ENCODE measurements at regions of chr19 and their contacts with region 1.

Region 1: GRCh38 chr19:49676690-49677231 is 310 bp upstream of the PRMT1 start:
- DNase-seq: peak; percentile 96 to 100 (median 98)
- ATAC-seq: peak; percentile 75
- H3K4me3 ChIP-seq: peak overlapping the region; percentile 83 to 99
- H3K4me3 Mint-ChIP-seq: peak overlapping the region; percentile 99
- H3K27ac ChIP-seq: peak overlapping the region; percentile 86 to 99
- H3K27ac Mint-ChIP-seq: peak overlapping the region; percentile 99
- H3K4me1 ChIP-seq: peaks cover 40% of the 10 kb centered on the region
- H3K4me1 Mint-ChIP-seq: peaks cover 43% of the 10 kb centered on the region
- H3K27me3 ChIP-seq: no peaks in the 10 kb centered on the region
- H3K27me3 Mint-ChIP-seq: no peaks in the 10 kb centered on the region
- CTCF ChIP-seq: no peak

Region 2: DNA sequence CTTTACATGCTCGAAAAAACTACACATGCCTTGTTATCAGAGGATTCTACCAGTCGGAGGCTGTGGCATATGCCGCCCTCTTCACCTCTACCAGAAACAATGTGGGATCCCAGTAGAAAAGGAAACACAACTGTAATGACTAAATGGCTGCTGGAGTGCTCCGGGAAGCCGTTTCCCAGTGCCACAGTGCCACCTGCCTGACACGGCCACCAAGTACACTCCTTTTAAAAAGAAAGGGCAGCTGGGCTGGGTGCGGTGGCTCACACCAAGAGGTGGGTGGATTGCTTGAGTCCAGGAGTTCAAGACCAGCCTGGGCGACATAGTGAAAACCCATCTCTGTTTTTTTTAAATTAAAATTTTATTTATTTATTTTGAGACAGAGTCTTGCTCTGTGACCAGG is 451.9 kb before region 1 on chr19:
- CTCF ChIA-PET with region 1: no interaction called
- POLR2A ChIA-PET with region 1: no interaction called
- intact Hi-C with region 1: loop called (anchors 2 to 5 kb)
- DNase-seq: peak in 2 of 9 experiments; percentile 26 to 28
- ATAC-seq: no peak
- H3K4me3 ChIP-seq: no peak overlapping the region
- H3K4me3 Mint-ChIP-seq: no peak overlapping the region
- H3K27ac ChIP-seq: no peak overlapping the region
- H3K27ac Mint-ChIP-seq: no peak overlapping the region
- H3K4me1 ChIP-seq: peaks cover 8% of the 10 kb centered on the region
- H3K4me1 Mint-ChIP-seq: peaks cover 4% of the 10 kb centered on the region
- H3K27me3 ChIP-seq: no peaks in the 10 kb centered on the region
- H3K27me3 Mint-ChIP-seq: peaks cover 12% of the 10 kb centered on the region
- CTCF ChIP-seq: no peak

Region 3: DNA sequence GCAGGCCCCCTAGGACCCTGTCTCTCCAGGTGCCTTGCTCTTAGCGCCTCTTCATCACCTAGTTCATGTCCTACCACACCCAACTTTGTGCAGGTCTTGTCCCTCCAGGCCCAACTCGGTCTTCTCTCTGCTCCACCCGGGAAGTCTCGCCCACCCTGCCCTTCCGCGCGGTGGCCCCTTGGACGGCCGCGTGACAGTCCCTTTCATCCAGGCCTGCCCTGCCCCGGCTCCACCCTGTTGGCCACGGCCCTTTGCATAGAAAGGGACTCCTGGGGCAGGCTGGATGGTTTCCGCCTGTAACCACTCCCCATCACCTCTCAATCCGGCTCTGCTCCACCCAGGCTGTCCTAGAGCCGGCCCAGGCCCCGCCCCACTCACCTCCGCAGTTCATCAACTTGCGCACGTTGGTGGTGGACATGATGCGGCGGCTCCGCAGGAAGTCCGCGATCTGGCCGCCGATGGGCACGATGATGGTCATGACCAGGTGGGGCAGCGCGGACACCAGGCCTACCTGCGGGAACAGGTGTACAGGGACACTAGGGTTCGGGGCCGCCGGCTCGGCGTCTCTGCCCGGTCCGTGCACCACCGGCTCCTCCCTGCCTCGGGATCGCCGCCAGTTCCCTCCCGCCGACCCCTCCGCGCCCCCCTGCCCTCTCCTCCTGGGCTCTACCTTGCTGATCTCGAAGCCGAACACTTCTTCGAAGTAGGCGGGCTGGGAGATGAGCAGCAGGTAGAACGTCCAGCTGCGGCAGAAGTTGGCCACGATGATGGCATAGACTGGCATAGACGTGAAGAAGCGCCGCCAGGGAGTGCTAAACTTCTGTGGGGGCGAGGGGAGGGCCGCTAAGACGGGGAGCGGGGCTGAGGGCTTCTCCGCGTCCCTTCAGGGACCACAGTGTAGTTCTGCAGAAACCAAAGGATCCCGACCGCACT is 244.4 kb before region 1 on chr19:
- CTCF ChIA-PET with region 1: no interaction called
- POLR2A ChIA-PET with region 1: no interaction called
- intact Hi-C with region 1: no loop called
- DNase-seq: peak in 3 of 9 experiments; percentile 30 to 52 (median 43)
- ATAC-seq: peak; percentile 54
- H3K4me3 ChIP-seq: no peak overlapping the region
- H3K4me3 Mint-ChIP-seq: no peak overlapping the region
- H3K27ac ChIP-seq: no peak overlapping the region
- H3K27ac Mint-ChIP-seq: no peak overlapping the region
- H3K4me1 ChIP-seq: peaks cover 43% of the 10 kb centered on the region
- H3K4me1 Mint-ChIP-seq: peaks cover 40% of the 10 kb centered on the region
- H3K27me3 ChIP-seq: peaks cover 58 to 79% of the 10 kb centered on the region in 2 experiments
- H3K27me3 Mint-ChIP-seq: peaks cover 75% of the 10 kb centered on the region
- CTCF ChIP-seq: no peak

Region 4: GRCh38 chr19:49443366-49444099 is 233.2 kb before region 1 on chr19:
- CTCF ChIA-PET with region 1: no interaction called
- POLR2A ChIA-PET with region 1: no interaction called
- intact Hi-C with region 1: loop called in 1 of 2 experiments (anchors 2 kb)
- DNase-seq: peak; percentile 86 to 97 (median 94)
- ATAC-seq: peak; percentile 88
- H3K4me3 ChIP-seq: peak overlapping the region; percentile 57 to 76
- H3K4me3 Mint-ChIP-seq: peak overlapping the region; percentile 79
- H3K27ac ChIP-seq: peak overlapping the region; percentile 48 to 66
- H3K27ac Mint-ChIP-seq: peak overlapping the region; percentile 71
- H3K4me1 ChIP-seq: peaks cover 25% of the 10 kb centered on the region
- H3K4me1 Mint-ChIP-seq: peaks cover 37% of the 10 kb centered on the region
- H3K27me3 ChIP-seq: peaks cover 37 to 40% of the 10 kb centered on the region in 2 experiments
- H3K27me3 Mint-ChIP-seq: peaks cover 36% of the 10 kb centered on the region
- CTCF ChIP-seq: peak; percentile 74

Region 5: GRCh38 chr19:49497047-49497788 is 179.5 kb before region 1 on chr19:
- CTCF ChIA-PET with region 1: interaction called, 68 read pairs
- POLR2A ChIA-PET with region 1: interaction called, 11 read pairs
- intact Hi-C with region 1: no loop called
- DNase-seq: peak; percentile 54 to 91 (median 78)
- ATAC-seq: peak; percentile 9
- H3K4me3 ChIP-seq: peak overlapping the region; percentile 95 to 96
- H3K4me3 Mint-ChIP-seq: peak overlapping the region; percentile 100
- H3K27ac ChIP-seq: peak overlapping the region; percentile 95 to 98
- H3K27ac Mint-ChIP-seq: peak overlapping the region; percentile 98
- H3K4me1 ChIP-seq: peaks cover 39% of the 10 kb centered on the region
- H3K4me1 Mint-ChIP-seq: peaks cover 59% of the 10 kb centered on the region
- H3K27me3 ChIP-seq: no peaks in the 10 kb centered on the region
- H3K27me3 Mint-ChIP-seq: no peaks in the 10 kb centered on the region
- CTCF ChIP-seq: no peak

Region 6: DNA sequence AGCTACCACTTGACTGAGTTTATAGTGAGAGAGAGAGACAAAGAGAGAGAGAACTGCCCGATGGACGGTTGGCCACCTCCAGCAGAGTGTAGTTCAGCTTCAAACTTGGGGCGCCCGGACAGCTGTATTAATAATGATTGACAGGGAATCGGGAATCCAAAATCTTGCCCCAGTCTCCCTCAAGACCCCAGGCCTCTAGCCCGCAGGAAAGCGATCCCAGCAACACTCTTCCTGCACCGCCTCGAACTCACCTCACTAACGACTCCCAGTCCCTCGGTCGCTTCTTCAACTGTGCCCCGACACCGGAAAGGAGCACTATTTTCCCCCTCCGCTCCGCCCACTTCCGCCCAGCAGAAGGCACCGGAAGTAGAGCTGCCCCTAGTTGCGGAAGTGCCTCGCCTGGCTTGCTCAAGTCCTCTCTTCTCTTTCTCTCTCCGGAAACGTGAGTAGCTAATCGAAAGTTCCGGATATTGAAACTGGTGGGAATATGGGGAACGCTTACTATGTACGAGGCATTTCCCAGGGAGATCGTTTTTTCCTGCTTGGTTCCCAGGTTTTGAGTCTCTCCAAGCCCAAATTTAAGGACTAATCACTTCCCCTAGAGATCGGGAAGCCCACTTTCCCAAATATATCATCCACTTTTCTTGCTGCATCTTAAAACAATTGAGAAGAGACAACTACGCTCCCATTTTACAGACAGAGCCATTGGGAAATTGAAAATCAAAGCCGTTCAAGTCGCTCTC is 96.3 kb before region 1 on chr19 and contains the start of gene NOSIP:
- CTCF ChIA-PET with region 1: interaction called, 31 read pairs
- POLR2A ChIA-PET with region 1: interaction called, 17 read pairs
- intact Hi-C with region 1: no loop called
- DNase-seq: peak; percentile 93 to 98 (median 97)
- ATAC-seq: peak; percentile 97
- H3K4me3 ChIP-seq: peak within 1 kb of the TSS; percentile 68 to 71
- H3K4me3 Mint-ChIP-seq: peak within 1 kb of the TSS; percentile 95
- H3K27ac ChIP-seq: peak within 1 kb of the TSS; percentile 63 to 66
- H3K27ac Mint-ChIP-seq: peak within 1 kb of the TSS; percentile 94
- H3K4me1 ChIP-seq: peaks cover 22% of the 10 kb centered on the region
- H3K4me1 Mint-ChIP-seq: peaks cover 39% of the 10 kb centered on the region
- H3K27me3 ChIP-seq: no peaks in the 10 kb centered on the region
- H3K27me3 Mint-ChIP-seq: no peaks in the 10 kb centered on the region
- CTCF ChIP-seq: no peak
- total RNA-seq, gene NOSIP: 103 to 110 TPM

Region 7: DNA sequence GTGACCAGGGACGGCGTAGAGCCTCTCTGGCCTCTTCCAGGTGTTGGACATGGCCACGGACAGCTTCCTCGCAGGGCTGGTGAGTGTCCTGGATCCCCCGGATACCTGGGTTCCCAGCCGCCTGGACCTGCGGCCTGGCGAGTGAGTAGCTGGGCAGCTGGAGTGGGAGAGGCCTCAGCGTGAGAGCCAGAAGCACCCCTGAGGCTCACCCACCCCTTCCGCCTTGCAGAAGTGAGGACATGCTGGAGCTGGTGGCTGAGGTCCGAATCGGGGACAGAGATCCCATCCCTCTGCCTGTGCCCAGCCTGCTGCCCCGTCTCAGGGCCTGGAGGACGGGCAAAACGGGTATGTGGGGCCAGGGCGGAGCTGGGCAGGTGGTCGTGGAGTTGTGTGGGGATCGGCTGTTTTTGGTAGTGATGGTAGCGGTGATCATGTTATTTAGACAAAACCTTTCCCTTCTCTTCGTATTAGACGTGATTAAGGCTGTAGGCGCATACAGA is 30.2 kb before region 1 on chr19:
- CTCF ChIA-PET with region 1: interaction called, 25 read pairs
- POLR2A ChIA-PET with region 1: interaction called, 6 read pairs
- intact Hi-C with region 1: loop called in 1 of 2 experiments (anchors 1 kb)
- DNase-seq: no peak
- ATAC-seq: no peak
- H3K4me3 ChIP-seq: no peak overlapping the region
- H3K4me3 Mint-ChIP-seq: no peak overlapping the region
- H3K27ac ChIP-seq: no peak overlapping the region
- H3K27ac Mint-ChIP-seq: no peak overlapping the region
- H3K4me1 ChIP-seq: peaks cover 21% of the 10 kb centered on the region
- H3K4me1 Mint-ChIP-seq: peaks cover 36% of the 10 kb centered on the region
- H3K27me3 ChIP-seq: no peaks in the 10 kb centered on the region
- H3K27me3 Mint-ChIP-seq: no peaks in the 10 kb centered on the region
- CTCF ChIP-seq: no peak

Region 8: DNA sequence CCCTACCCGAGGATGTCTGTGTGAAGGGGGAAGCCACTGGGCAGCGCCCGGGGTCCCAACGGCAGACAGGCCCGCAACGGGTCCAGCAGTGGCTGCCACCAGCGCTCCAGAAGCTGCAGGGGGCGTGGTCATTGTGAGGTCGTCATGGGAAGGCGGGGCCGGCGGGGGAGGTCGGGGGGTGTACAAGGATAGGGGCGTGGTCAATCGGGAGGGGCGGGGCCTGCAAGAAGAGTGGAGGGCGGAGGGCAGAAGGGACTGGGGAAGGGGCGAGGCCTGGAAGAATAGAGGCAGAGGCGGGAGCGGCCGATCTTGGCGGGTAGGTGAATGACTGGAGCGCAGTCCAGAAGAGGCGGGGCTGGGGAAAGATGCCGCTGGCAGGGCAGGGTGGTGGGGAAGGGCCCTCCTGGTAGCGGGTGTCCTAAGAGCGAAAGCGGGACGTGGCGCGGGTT is 132.0 kb after region 1 on chr19:
- CTCF ChIA-PET with region 1: no interaction called
- POLR2A ChIA-PET with region 1: interaction called, 3 read pairs
- intact Hi-C with region 1: loop called in 1 of 2 experiments (anchors 2 kb)
- DNase-seq: peak; percentile 64 to 89 (median 86)
- ATAC-seq: peak; percentile 61
- H3K4me3 ChIP-seq: peak overlapping the region; percentile 59 to 65
- H3K4me3 Mint-ChIP-seq: peak overlapping the region; percentile 84
- H3K27ac ChIP-seq: peak overlapping the region; percentile 44 to 53
- H3K27ac Mint-ChIP-seq: peak overlapping the region; percentile 27
- H3K4me1 ChIP-seq: peaks cover 21% of the 10 kb centered on the region
- H3K4me1 Mint-ChIP-seq: peaks cover 31% of the 10 kb centered on the region
- H3K27me3 ChIP-seq: no peaks in the 10 kb centered on the region
- H3K27me3 Mint-ChIP-seq: no peaks in the 10 kb centered on the region
- CTCF ChIP-seq: no peak